ENCODE measurements at regions of chr7 and their contacts with region 1.

Region 1: GRCh38 chr7:81469869-81470723 is 299.8 kb downstream of the HGF start:
- DNase-seq: peak; percentile 29
- H3K4me3 Mint-ChIP-seq: no peak overlapping the region
- H3K27ac Mint-ChIP-seq: no peak overlapping the region
- H3K4me1 Mint-ChIP-seq: no peaks in the 10 kb centered on the region
- H3K27me3 Mint-ChIP-seq: no peaks in the 10 kb centered on the region

Region 2: DNA sequence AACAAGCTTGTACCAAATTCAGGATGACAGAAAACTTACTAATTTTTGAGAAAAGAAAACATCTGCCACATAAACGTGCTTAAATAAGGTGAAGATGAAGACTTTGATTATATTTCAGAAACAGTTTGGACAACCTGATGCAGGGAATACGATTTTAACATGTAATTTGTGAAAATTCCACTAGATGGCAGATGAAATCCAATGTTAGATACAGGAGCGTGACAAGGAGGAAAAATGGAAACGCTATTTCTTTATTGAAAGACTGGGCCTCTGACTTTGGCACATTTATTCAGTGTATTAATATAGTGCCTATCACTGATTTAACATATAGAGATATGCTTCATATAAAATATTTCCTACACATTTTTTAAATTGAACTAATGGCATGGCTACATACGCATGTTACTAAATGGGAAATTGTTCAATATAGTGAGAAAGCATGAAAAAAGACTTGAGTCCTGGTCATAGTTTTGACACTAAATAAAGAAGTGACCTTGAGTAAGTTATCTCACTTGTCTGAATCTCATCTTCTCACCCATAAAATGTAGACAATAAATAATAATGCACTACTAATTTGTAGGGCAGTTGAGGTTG is 771.0 kb before region 1 on chr7:
- CTCF ChIA-PET with region 1: interaction called, 8 read pairs
- POLR2A ChIA-PET with region 1: no interaction called
- intact Hi-C with region 1: loop called (anchors 1 kb)
- DNase-seq: no peak
- H3K4me3 Mint-ChIP-seq: no peak overlapping the region
- H3K27ac Mint-ChIP-seq: no peak overlapping the region
- H3K4me1 Mint-ChIP-seq: no peaks in the 10 kb centered on the region
- H3K27me3 Mint-ChIP-seq: no peaks in the 10 kb centered on the region

Region 3: DNA sequence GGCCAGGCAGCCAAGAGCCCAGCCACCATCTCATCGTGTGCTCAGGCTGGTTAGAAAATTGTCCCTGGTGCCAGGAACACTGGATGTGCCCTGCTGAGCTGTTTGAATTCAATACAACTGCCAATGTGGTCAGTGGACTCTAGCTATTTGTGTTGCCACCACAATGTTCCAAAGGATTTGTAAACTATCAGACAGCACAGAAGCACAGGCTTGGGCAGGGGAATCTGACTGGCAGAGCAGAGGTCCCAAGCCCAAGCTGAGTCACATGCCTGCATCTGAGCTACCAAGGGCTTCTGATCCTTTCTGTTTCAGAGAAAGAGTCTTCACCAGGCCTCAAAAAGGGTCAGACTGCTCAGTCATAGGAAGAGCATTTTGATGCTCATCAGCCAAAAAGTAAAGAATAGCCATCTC is 319.1 kb before region 1 on chr7:
- CTCF ChIA-PET with region 1: no interaction called
- POLR2A ChIA-PET with region 1: no interaction called
- intact Hi-C with region 1: no loop called
- DNase-seq: no peak
- H3K4me3 Mint-ChIP-seq: no peak overlapping the region
- H3K27ac Mint-ChIP-seq: no peak overlapping the region
- H3K4me1 Mint-ChIP-seq: no peaks in the 10 kb centered on the region
- H3K27me3 Mint-ChIP-seq: no peaks in the 10 kb centered on the region

Region 4: GRCh38 chr7:81294897-81295515 is 175.1 kb before region 1 on chr7:
- CTCF ChIA-PET with region 1: no interaction called
- POLR2A ChIA-PET with region 1: no interaction called
- intact Hi-C with region 1: no loop called
- DNase-seq: no peak
- H3K4me3 Mint-ChIP-seq: no peak overlapping the region
- H3K27ac Mint-ChIP-seq: no peak overlapping the region
- H3K4me1 Mint-ChIP-seq: no peaks in the 10 kb centered on the region
- H3K27me3 Mint-ChIP-seq: no peaks in the 10 kb centered on the region

Measured in activated CD4-positive, alpha-beta memory T cell treated with anti-CD3 and anti-CD28 coated beads for 36 hours (primary cell).